Colonic mucosa (tissue), 4 donors: ENCODE measurements at regions of chr1 and their contacts with region 1.

Region 1: DNA sequence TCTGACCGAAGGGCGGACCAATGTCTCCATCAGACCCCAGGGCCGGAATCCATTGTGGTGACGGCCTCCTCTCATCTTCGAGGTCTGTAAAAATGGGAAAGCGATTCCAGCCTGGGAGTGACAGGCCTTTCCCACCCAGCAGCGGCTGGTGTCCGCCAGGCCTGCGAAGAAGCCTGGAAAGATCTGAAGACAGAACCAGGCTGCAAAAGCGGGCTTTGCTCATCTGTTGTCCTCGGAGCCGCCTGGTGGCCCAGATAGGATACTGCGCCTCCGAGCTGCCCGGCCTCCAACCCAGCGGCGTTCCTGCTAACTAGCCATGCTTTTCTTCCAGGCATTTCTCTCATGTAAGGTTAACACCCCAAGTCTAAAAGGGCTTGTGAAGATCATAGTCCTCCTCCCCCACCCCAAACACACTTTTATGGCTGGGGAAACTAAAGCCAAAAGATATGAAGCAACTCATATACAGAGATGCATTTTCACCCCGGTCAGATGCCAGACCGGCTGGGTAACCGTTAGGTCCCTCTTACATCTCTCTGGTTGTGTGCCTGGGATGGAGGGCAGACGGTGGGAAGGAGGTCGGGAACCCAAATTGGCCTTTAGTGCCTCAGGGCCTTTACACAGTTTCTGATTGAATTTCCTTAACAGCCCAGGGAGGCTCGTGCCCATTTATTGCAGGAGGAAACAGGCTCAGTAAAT is 1.9 kb upstream of the DHRS3 start:
- DNase-seq: peak; percentile 91
- H3K4me3 ChIP-seq: peak overlapping the region; percentile 86
- H3K27ac ChIP-seq: peak overlapping the region; percentile 97
- H3K4me1 ChIP-seq: peaks cover 8% of the 10 kb centered on the region
- H3K27me3 ChIP-seq: no peaks in the 10 kb centered on the region
- CTCF ChIP-seq: peak; percentile 98

Region 2: DNA sequence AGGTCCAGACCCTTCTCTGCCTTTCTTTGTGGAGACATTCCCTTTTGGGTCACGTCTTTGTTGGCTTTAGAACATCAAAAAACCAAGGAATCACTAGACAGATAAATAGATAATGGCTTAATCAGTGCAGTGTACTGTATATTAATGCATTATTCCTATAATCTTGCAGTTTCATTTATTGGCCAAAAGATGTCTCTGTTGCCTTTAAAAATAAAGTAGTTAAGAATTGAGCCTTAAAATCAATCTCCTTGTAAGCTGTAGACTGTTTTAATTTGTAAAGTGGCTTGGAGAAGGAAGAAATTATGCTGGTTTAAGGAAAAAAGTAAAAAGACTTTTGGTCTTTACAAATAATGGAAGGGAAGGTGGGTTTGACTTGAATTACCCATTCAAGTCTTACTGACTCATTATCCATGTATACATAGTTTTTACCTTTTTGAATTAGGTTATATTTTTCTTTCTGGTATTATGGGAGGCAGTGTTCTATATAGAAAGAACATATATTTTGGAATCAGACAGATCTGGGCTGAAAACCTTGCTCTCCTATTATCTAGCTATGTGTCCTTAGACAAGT is 305.5 kb before region 1 on chr1:
- intact Hi-C with region 1: loop called (anchors 5 kb)
- DNase-seq: no peak
- H3K4me3 ChIP-seq: no peak overlapping the region
- H3K27ac ChIP-seq: no peak overlapping the region
- H3K4me1 ChIP-seq: no peaks in the 10 kb centered on the region
- H3K27me3 ChIP-seq: no peaks in the 10 kb centered on the region
- CTCF ChIP-seq: peak; percentile 23

Region 3: DNA sequence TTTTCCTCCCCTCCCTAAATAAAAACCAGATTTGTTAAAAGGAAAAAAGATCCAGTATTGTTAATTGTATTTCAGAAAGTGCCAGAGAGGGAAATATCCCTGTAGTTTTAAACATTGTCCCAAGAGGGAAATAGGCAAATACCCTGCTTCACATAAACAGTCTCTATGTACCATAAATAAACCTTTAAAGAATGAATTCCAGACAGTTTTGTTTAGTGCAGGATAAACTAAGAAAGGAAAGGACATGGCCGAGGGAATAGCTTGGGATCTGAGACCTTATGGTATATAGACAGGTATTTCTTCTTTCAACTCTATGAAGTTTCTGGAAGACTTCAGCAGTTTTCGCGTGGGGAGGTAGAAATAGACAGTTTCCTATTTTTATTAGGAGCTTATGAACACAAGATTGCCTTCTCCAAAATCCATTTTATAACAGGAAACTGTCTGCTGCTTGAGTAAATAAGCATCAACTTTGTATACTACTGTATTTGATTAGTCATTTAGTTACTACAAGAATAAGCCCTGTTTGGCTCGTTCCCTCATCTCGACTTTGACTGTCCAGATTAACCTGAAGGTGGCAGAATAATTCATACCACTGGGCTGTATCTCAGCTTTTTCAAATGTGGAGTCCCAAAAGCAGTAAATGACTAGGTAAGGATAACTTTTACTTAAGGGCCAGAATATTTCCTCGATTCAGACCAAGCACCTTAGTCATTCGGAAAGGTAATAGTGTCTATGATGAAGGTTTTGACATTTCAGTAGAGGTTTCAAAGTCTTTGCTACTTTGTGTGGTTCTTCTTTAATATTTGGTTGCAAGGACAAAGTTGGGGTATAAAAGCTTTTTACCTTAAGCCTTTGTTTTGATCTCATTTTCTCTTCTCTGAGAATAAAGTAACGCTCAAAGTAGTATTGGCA is 212.6 kb before region 1 on chr1:
- intact Hi-C with region 1: loop called (anchors 5 kb)
- DNase-seq: peak; percentile 50
- H3K4me3 ChIP-seq: no peak overlapping the region
- H3K27ac ChIP-seq: peak overlapping the region; percentile 54
- H3K4me1 ChIP-seq: peaks cover 17% of the 10 kb centered on the region
- H3K27me3 ChIP-seq: no peaks in the 10 kb centered on the region
- CTCF ChIP-seq: no peak

Region 4: GRCh38 chr1:12477936-12478611 is 141.9 kb before region 1 on chr1:
- intact Hi-C with region 1: loop called (anchors 2 kb)
- DNase-seq: peak; percentile 93
- H3K4me3 ChIP-seq: no peak overlapping the region
- H3K27ac ChIP-seq: peak overlapping the region; percentile 91
- H3K4me1 ChIP-seq: peaks cover 58% of the 10 kb centered on the region
- H3K27me3 ChIP-seq: no peaks in the 10 kb centered on the region
- CTCF ChIP-seq: no peak

Region 5: DNA sequence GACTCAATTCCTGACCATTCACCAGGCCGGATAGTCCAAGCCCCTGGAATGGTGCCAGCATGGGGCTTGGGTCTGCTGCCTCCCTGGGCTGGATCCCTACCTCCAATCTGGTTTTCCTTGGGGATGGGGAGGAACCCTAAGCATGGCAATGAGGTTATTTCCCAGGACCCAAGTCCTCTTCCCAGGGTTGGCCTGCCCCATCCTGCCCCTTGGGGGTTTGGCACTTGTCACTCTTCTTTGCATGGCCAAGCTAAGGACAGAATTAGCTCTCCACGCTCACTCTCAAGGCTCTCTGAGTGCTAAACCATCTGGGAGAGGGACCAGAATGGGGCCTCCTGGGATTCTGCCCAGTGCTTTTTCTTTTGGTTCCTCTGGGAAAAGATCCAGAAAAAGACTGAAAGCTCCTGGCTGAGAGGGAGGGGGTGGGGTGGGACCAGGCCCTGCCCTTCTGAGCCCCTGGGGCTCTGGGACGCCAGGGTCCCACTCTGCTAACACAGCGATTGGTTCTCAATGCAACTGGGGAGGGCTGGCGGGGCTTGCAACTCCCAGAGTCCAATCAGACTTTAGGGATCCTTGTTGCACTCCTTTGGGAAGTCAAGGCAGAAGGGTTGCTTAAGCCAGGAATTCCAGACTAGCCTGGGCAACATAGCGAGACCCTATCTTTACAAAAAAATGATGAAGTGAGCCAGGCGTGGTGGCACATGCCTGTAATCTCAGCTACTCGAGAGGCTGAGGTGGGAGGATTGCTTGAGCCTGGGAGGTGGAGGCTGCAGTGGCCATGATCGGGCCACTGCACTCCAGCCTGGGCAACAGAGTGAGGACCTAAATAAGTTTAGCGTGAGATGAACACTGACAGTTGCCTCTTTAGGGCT is 54.6 kb before region 1 on chr1:
- intact Hi-C with region 1: no loop called
- DNase-seq: no peak
- H3K4me3 ChIP-seq: no peak overlapping the region
- H3K27ac ChIP-seq: no peak overlapping the region
- H3K4me1 ChIP-seq: no peaks in the 10 kb centered on the region
- H3K27me3 ChIP-seq: no peaks in the 10 kb centered on the region
- CTCF ChIP-seq: no peak

Region 6: GRCh38 chr1:12596007-12596821 is 23.7 kb before region 1 on chr1:
- intact Hi-C with region 1: loop called (anchors 2 kb)
- DNase-seq: peak; percentile 56
- H3K4me3 ChIP-seq: peak overlapping the region; percentile 25
- H3K27ac ChIP-seq: peak overlapping the region; percentile 83
- H3K4me1 ChIP-seq: peaks cover 19% of the 10 kb centered on the region
- H3K27me3 ChIP-seq: no peaks in the 10 kb centered on the region
- CTCF ChIP-seq: no peak